Aorta (tissue), 5 donors: ENCODE measurements at regions of chr9 and their contacts with region 1.

Region 1: GRCh38 chr9:127869310-127870152 is 7.9 kb downstream of the AK1 start:
- DNase-seq: peak; percentile 95 to 98
- ATAC-seq: peak; percentile 89
- H3K4me3 ChIP-seq: no peak overlapping the region
- H3K27ac ChIP-seq: peak overlapping the region in 1 of 2 donors; percentile 3
- H3K4me1 ChIP-seq: no peaks in the 10 kb centered on the region
- H3K27me3 ChIP-seq: no peaks in the 10 kb centered on the region

Region 2: DNA sequence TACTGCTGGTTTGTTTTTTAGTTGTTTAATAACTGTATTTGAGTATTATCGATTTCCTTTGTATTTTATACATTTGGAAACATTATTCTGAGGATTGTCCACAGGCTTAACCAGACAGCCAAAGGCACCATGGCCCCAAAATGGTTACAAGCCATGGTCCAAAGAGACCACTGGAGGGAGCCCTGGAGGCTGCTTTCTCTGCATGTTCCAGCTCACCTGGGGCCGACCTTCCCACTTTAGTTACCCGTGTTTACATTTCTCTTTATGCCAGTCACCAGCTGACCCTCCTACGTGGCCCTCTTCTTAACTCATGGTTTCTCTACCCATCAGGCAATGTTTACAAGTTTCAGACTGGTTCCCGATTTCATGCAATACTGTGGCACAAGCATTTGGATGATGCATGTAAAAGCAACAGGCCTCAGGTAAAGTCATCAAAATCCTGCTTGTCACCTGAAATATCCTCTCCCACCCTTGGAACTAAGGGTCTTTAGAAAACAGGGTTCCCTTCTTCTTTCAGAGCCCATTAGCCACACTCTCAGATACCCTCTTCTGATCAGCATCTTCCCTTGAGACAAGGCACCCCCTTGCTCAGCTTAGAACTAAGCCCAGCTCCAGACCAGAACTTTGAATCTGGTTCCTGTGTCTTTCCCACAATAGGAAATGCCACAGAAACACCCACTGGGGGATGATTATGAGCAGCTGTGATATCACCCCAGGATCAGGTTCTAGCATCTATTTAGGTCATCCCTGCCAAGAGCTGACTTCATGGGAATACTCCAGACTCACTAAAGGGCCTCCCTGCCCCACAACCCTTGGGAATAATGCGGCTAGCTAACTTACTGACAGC is 654.9 kb before region 1 on chr9:
- intact Hi-C with region 1: no loop called
- DNase-seq: peak in 1 of 2 donors; percentile 84
- ATAC-seq: no peak
- H3K4me3 ChIP-seq: no peak overlapping the region
- H3K27ac ChIP-seq: no peak overlapping the region
- H3K4me1 ChIP-seq: no peaks in the 10 kb centered on the region
- H3K27me3 ChIP-seq: no peaks in the 10 kb centered on the region

Region 3: DNA sequence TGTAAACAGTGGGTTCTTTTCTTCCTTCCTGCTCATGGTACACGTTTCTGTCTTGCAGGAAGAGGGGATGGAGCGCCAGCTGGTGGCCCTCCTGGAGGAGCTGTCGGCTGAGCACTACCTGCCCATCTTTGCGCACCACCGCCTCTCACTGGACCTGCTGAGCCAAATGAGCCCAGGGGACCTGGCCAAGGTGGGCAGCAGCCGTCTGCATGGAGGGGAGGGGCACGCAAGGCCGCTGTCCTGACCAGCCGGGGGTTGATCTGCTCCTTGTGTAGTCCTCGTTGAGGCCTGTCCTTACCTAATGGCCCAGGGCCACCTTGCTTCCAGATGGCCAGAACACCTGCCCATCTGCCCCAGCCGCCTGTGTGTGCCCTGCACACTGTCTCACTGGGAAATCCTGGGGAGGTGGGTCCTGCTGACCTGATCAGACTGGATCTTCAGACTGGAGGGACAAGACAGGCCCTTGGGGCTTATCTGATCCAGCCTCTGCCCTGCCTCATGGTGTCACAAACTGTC is 373.6 kb before region 1 on chr9:
- intact Hi-C with region 1: no loop called
- DNase-seq: no peak
- ATAC-seq: no peak
- H3K4me3 ChIP-seq: no peak overlapping the region
- H3K27ac ChIP-seq: peak overlapping the region; percentile 35 to 71
- H3K4me1 ChIP-seq: no peaks in the 10 kb centered on the region
- H3K27me3 ChIP-seq: no peaks in the 10 kb centered on the region

Region 4: DNA sequence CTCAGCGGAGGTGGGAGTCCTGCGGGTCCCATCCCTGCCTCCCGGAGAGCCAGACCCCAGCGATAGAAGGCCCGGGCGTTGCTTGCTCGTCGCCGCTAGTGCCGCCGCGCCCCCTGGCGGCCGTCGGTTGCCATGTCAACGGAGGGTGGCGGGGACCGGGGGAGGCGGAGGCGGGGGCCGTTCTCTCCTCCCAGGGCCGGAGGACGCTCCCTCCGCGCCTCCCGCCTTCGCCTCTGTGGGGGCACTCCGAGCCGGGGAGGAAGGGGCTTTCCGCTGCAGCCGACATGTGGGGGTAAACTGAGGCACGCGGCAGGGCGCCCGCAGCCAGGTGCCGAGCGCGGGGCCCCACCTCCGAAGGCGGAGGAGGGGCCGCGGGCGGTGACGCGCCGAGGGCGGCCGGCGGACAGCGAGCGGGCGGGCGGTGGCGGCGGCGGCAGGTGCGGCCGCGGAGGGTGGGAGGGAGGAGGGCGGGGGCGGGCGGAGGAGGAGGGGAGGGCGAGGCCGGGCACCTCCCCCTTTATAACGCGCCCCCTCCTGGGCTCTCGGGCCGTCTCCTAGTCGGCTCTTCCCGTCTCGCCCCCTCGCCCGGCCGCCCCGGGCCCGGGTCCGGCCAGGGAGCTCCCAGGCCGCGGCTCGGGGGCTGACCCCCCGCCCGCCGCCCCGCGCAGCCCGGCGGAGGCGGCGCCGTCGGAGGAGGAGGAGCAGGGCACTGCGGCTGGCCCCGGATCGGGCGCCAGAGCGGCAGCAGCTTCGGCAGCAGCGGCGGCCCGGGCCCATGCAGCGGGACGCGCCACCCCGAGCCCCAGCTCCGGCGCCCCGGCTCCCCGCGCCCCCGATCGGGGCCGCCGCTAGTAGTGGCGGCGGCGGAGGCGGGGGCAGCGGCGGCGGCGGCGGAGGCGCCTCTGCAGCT is 84.3 kb before region 1 on chr9:
- intact Hi-C with region 1: loop called in 1 of 2 experiments (anchors 5 kb)
- DNase-seq: peak; percentile 92 to 97
- ATAC-seq: peak; percentile 89
- H3K4me3 ChIP-seq: peak overlapping the region; percentile 92 to 97
- H3K27ac ChIP-seq: peak overlapping the region; percentile 60 to 78
- H3K4me1 ChIP-seq: no peaks in the 10 kb centered on the region
- H3K27me3 ChIP-seq: no peaks in the 10 kb centered on the region

Region 5: DNA sequence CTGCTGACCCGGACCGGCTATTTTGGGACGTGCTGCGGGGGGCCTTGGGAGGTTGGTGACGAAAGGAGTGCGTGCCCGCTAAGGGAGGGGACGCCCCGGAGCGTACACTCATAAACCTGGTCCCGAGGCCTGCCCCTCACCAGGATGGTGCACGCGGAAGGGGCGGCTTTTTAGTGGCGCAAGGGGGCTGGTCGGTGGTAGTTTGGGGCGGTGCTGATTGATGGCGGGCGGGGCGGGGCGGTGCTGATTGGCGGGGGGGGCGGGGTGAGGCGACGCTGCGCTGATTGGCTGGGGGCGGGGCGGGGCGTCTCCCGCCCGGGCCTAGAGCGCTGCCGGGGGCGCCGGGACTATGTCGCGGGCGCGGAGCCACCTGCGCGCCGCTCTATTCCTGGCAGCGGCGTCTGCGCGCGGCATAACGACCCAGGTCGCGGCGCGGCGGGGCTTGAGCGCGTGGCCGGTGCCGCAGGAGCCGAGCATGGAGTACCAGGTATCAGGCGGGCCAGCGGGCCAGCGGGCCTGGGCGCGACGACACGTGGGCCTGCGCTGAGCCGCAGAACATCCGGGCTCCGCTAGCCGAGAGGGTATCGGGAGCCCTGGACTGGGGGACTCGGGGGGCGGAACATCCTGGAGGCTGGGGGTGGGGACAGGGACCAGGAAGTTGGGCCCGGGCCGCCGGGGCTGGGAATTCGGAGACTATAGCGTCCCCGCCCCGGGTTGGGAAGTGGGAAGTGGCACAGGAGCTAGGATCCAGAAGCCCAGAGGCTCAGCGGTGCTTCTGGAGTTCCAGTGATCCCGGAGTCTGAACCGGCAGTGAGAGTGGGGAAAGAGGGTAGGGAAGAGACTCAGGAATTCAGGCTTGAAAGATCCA is 66.7 kb before region 1 on chr9 and contains the start of gene FPGS:
- intact Hi-C with region 1: loop called (anchors 5 to 10 kb)
- DNase-seq: peak; percentile 95 to 96
- ATAC-seq: peak; percentile 94
- H3K4me3 ChIP-seq: peak within 1 kb of the TSS; percentile 50 to 71
- H3K27ac ChIP-seq: peak within 1 kb of the TSS; percentile 81 to 87
- H3K4me1 ChIP-seq: no peaks in the 10 kb centered on the region
- H3K27me3 ChIP-seq: no peaks in the 10 kb centered on the region
- total RNA-seq, gene FPGS: 61.9 to 77.7 TPM